ENCODE measurements at regions of chr20 and their contacts with region 1.

Region 1: DNA sequence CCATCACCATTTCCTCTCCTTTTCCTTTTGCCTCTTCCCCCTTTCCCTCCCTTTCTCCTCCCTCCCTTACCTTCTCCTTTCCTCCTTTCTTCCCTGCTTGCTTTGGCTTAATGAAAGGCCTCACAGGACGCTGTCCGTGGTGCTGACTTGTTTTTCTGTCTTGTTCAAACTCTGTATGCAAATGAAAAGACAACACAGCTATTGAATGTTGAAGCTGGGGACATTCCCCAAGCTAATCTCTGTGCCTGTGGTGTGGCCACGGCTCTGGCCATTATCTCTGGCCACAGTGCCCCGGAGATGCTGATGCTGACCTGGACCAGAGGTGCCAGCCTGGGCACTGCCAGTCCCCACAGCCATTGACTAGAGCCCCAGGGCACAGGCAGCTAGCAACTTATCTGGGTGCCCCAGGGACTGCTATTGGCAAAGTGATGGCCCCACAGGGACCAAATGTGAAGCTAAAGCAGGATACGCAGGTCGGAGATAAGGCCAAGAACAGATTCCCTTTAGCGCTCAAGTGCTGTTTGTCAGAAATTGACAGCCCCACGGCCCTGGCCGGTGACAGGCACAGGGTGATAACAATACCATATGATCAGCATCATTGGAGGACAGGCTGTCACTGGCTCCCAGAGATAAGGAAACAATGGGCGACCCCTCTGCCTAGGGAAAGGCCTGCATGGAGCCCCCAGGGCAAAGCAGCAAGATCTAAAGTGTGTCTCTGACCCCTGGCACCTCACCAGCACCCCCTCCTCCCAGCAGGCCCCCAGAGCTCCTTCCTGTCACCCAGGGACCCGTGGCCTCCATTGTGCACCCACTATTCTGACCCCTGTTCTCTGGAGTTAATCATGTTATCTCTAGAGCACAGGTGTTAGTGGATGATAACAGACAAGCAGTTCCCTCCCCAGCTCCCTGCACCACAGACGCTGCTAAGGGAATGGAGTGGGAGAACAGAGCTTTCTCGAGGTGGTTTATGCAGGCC is 31.6 kb upstream of the SLC32A1 start:
- DNase-seq: peak; percentile 59
- H3K4me3 Mint-ChIP-seq: no peak overlapping the region
- H3K27ac Mint-ChIP-seq: no peak overlapping the region
- H3K4me1 Mint-ChIP-seq: no peaks in the 10 kb centered on the region
- H3K27me3 Mint-ChIP-seq: peaks cover 18% of the 10 kb centered on the region

Region 2: GRCh38 chr20:38640521-38640920 is 52.2 kb before region 1 on chr20:
- CTCF ChIA-PET with region 1: no interaction called
- POLR2A ChIA-PET with region 1: no interaction called
- intact Hi-C with region 1: loop called (anchors 1 kb)
- DNase-seq: no peak
- H3K4me3 Mint-ChIP-seq: no peak overlapping the region
- H3K27ac Mint-ChIP-seq: no peak overlapping the region
- H3K4me1 Mint-ChIP-seq: no peaks in the 10 kb centered on the region
- H3K27me3 Mint-ChIP-seq: peaks cover 23% of the 10 kb centered on the region

Region 3: DNA sequence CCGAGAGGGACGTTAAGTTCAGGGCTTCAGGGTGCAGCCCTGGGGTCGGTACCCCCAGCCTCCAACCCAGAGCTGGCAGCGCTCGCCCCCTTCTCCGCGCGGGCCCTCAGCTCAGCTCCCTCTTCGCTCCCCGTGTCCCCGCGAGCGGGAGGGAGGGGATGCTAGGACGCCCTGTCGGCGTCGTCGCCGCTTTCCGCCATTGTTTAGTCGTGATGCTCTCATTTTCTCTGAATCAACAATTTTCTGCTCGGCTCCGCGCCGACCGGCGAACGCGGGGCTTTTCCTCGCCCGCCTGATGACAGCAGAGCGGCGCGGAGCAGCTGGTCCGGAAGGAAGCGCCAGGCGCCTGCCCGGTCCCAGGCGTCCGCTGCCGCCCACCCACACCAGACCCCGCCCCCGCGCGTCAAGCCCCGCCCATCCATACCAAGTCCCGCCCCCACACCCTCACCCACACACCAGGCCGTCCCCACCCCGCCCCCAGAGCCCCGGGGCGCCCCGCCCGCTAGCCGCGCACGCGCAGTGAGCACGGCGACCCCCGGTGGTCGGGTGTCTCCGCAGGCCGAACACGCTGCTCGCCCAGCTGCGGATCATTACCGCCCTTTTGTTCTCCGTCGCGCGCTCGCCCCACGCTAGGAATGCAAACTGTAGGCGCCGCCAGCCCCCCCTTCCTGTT is 18.5 kb before region 1 on chr20:
- CTCF ChIA-PET with region 1: no interaction called
- POLR2A ChIA-PET with region 1: no interaction called
- intact Hi-C with region 1: no loop called
- DNase-seq: peak; percentile 79
- H3K4me3 Mint-ChIP-seq: peak overlapping the region; percentile 75
- H3K27ac Mint-ChIP-seq: no peak overlapping the region
- H3K4me1 Mint-ChIP-seq: peaks cover 7% of the 10 kb centered on the region
- H3K27me3 Mint-ChIP-seq: peaks cover 31% of the 10 kb centered on the region

Region 4: GRCh38 chr20:38818113-38819065 is 125.7 kb after region 1 on chr20:
- CTCF ChIA-PET with region 1: no interaction called
- POLR2A ChIA-PET with region 1: no interaction called
- intact Hi-C with region 1: no loop called
- DNase-seq: no peak
- H3K4me3 Mint-ChIP-seq: no peak overlapping the region
- H3K27ac Mint-ChIP-seq: peak overlapping the region; percentile 28
- H3K4me1 Mint-ChIP-seq: peaks cover 78% of the 10 kb centered on the region
- H3K27me3 Mint-ChIP-seq: no peaks in the 10 kb centered on the region

Measured in activated CD4-positive, alpha-beta memory T cell treated with anti-CD3 and anti-CD28 coated beads for 36 hours (primary cell).